CD8-positive, alpha-beta memory T cell (primary cell): ENCODE measurements at regions of chr11 and their contacts with region 1.

Region 1: DNA sequence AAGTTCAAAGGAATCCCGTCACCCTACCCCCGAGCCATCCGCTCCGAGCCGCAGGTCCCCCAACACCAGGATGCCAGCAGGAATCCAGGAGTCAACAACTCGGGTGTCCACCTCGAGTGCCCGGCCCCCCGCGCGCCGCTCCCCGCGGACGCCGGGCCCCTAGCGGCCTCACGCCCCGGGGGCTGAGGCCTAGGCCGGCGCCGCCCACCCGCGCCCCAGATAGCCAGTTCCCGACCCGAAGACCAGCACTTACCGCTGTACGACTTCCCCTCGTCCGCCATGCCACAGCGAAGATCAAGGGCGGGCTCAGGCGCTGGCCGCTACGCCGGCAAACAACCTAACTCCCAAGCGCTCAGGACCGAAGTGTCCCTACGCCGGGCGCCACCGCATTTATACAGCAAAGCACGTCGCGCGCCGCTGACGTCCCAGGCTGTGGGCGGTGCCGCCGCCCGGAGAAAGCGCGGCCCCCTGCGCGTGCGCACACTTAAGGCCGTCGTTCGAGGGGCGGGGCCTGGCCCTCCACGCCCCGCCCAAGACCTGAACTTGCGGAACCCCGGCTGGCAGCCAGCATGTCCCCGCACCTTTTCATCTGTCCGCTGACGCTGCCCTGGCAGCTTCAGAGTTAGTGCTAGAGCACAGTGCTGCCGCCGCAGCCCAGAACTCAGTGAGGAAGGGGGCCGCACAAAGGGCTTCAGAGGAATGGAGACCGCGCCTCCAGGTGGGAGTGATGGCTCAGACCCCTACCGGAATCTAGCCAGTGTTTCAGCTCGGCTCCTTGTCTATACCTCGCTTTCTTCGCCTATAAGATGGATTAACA is at the start of gene NXF1:
- DNase-seq: peak; percentile 94 to 98 (median 95)
- H3K4me3 ChIP-seq: peak within 1 kb of the TSS; percentile 70
- H3K4me3 Mint-ChIP-seq: peak within 1 kb of the TSS; percentile 96 to 99 (median 99)
- H3K27ac ChIP-seq: peak within 1 kb of the TSS; percentile 95
- H3K27ac Mint-ChIP-seq: peak within 1 kb of the TSS; percentile 95 to 99 (median 97)
- H3K4me1 ChIP-seq: peaks cover 26% of the 10 kb centered on the region
- H3K4me1 Mint-ChIP-seq: peaks cover 26 to 44% (median 30%) of the 10 kb centered on the region in 3 donors
- H3K27me3 ChIP-seq: no peaks in the 10 kb centered on the region
- H3K27me3 Mint-ChIP-seq: peaks cover 0 to 3% of the 10 kb centered on the region in 2 donors
- total RNA-seq, gene NXF1: 112 to 126 TPM

Region 2: DNA sequence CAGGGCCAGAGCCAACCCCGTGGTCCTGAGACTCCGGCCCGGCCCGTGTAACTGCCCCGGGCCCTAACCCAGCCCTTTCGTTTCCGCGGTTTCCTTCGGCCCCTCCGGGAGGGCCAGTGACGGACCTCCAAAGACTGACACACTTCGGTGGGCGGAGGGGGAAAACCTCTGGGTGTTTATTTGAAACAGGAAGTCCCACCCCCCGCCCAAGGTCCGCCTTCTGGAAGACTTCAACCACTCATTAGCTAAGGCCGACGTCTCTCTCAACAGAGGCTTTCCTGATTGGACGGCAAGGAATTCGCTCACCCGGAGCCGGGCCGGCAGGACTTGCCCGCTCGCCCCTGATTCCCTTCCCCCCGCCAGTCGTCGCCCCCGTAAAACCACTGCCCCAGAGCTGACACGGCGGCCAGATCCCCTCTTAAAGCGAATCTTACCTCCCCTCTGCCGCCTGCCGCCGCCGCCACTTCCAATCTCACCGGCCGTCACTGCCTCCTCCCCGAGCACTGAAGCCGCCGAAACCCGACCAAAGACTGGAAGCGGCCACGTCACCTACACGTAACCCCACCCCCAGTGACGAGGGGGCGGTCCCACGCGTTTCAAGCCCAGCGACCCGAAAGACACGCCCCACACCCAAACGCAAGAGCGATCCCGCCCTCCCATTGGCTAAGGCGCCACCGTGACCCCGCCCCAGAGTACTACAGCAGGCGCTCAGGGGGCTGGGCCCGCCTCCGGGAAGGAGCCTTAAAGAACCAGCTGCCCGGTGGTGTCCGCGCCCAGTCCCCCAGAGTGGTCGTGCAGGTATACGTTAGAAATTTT is 26.4 kb after region 1 on chr11 and contains the start of gene STX5:
- CTCF ChIA-PET with region 1: interaction called, 3 read pairs
- POLR2A ChIA-PET with region 1: interaction called, 13 read pairs
- DNase-seq: peak; percentile 99 to 100 (median 99)
- H3K4me3 ChIP-seq: peak within 1 kb of the TSS; percentile 96
- H3K4me3 Mint-ChIP-seq: peak within 1 kb of the TSS; percentile 93 to 100 (median 97)
- H3K27ac ChIP-seq: peak within 1 kb of the TSS; percentile 98
- H3K27ac Mint-ChIP-seq: peak within 1 kb of the TSS; percentile 96 to 100 (median 98)
- H3K4me1 ChIP-seq: peaks cover 29% of the 10 kb centered on the region
- H3K4me1 Mint-ChIP-seq: peaks cover 22 to 55% (median 35%) of the 10 kb centered on the region in 3 donors
- H3K27me3 ChIP-seq: no peaks in the 10 kb centered on the region
- H3K27me3 Mint-ChIP-seq: no peaks in the 10 kb centered on the region
- total RNA-seq, gene STX5: 34.7 to 35.3 TPM

Region 3: DNA sequence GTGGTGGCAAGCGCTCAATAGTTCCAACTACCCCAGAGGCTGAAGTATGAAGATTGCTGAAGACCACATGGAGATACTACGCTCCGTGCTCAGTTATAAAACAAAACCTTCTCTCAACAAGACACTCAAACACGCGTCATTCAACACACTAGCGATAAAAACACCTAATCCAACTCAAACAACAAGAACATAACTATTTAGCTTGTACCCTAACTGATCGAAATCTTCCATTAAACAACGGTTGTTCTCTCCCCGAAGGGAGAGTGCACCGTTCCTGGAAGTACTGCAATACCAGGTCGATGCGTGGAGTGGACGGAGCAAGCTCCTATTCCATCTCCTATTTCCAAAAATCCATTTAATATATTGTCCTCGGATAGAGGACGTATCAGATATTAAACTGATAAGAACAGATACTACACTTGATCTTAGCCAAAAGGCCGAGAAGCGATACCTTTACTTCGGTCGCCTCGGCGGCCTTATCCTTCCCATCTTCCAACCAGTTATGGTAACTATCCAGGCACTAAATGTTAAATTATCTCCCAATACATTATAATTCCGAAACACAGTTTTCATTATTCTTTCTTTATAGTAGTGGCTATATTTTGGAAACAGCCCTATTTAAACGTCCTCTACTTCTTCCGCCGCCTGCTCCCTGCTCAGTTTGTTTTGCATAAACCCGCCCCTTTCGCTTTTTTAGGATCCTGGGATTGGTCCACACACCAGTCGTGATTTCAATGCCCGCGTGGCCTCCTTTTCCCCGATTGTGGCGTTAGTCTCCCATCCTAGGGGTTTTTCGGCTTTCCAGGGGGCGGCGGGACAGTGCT is 36.3 kb after region 1 on chr11:
- CTCF ChIA-PET with region 1: no interaction called
- POLR2A ChIA-PET with region 1: interaction called, 21 read pairs
- DNase-seq: peak; percentile 69 to 90 (median 88)
- H3K4me3 ChIP-seq: peak overlapping the region; percentile 67
- H3K4me3 Mint-ChIP-seq: no peak overlapping the region
- H3K27ac ChIP-seq: peak overlapping the region; percentile 98
- H3K27ac Mint-ChIP-seq: no peak overlapping the region
- H3K4me1 ChIP-seq: peaks cover 23% of the 10 kb centered on the region
- H3K4me1 Mint-ChIP-seq: peaks cover 22 to 28% (median 27%) of the 10 kb centered on the region in 3 donors
- H3K27me3 ChIP-seq: no peaks in the 10 kb centered on the region
- H3K27me3 Mint-ChIP-seq: peaks cover 0 to 1% of the 10 kb centered on the region in 2 donors

Region 4: DNA sequence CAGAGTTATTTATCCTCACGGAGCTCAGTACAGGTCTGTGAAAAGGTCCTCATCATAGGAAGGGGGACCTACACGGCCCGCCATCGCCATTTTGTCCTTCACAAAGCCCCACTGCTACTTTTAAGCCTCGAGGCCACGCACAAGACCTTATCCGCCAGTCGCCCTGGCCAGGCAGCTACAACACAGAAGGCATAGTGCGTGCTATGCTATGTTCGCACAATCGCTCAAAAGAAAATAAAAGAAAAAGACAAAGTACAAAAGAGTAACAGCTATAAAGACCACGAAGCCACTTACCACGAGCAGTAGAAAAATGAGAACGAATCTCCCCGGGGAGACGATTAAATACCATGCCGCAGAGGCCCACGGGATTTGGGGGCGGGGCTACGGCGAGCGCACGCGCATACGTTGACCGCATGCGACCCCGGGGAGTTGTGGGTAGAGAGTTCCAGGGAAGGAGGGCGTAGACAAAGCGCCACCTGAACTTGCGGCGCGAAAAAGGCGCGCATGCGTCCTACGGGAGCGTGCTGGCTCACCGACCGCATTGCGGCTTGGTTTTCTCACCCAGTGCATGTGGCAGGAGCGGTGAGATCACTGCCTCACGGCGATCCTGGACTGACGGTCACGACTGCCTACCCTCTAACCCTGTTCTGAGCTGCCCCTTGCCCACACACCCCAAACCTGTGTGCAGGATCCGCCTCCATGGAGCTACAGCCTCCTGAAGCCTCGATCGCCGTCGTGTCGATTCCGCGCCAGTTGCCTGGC is 50.5 kb after region 1 on chr11:
- CTCF ChIA-PET with region 1: interaction called, 3 read pairs
- POLR2A ChIA-PET with region 1: interaction called, 13 read pairs
- DNase-seq: peak; percentile 94 to 99 (median 98)
- H3K4me3 ChIP-seq: peak overlapping the region; percentile 98
- H3K4me3 Mint-ChIP-seq: peak overlapping the region; percentile 94 to 99 (median 98)
- H3K27ac ChIP-seq: peak overlapping the region; percentile 94
- H3K27ac Mint-ChIP-seq: peak overlapping the region; percentile 84 to 96 (median 94)
- H3K4me1 ChIP-seq: peaks cover 47% of the 10 kb centered on the region
- H3K4me1 Mint-ChIP-seq: peaks cover 46 to 63% (median 55%) of the 10 kb centered on the region in 3 donors
- H3K27me3 ChIP-seq: no peaks in the 10 kb centered on the region
- H3K27me3 Mint-ChIP-seq: peaks cover 0 to 6% of the 10 kb centered on the region in 2 donors

Region 5: GRCh38 chr11:62860835-62861563 is 55.7 kb after region 1 on chr11:
- CTCF ChIA-PET with region 1: interaction called, 3 read pairs
- POLR2A ChIA-PET with region 1: interaction called, 13 read pairs
- DNase-seq: peak in 1 of 5 donors; percentile 3
- H3K4me3 ChIP-seq: no peak overlapping the region
- H3K4me3 Mint-ChIP-seq: no peak overlapping the region
- H3K27ac ChIP-seq: peak overlapping the region; percentile 38
- H3K27ac Mint-ChIP-seq: peak overlapping the region in 2 of 8 donors; percentile 17 to 91
- H3K4me1 ChIP-seq: peaks cover 8% of the 10 kb centered on the region
- H3K4me1 Mint-ChIP-seq: peaks cover 9 to 17% (median 17%) of the 10 kb centered on the region in 3 donors
- H3K27me3 ChIP-seq: no peaks in the 10 kb centered on the region
- H3K27me3 Mint-ChIP-seq: peaks cover 0 to under 1% of the 10 kb centered on the region in 2 donors